CD4-positive, alpha-beta memory T cell (primary cell): ENCODE measurements at regions of chr14 and their contacts with region 1.

Region 1: GRCh38 chr14:50860478-50861086 is 11.3 kb upstream of the ABHD12B start:
- DNase-seq: peak; percentile 82 to 89 (median 86)
- H3K4me3 ChIP-seq: peak overlapping the region; percentile 67 to 84
- H3K4me3 Mint-ChIP-seq: peak overlapping the region; percentile 88 to 95 (median 94)
- H3K27ac ChIP-seq: peak overlapping the region; percentile 40
- H3K27ac Mint-ChIP-seq: peak overlapping the region; percentile 78 to 93 (median 91)
- H3K4me1 ChIP-seq: peaks cover 13% of the 10 kb centered on the region
- H3K4me1 Mint-ChIP-seq: peaks cover 2 to 16% (median 9%) of the 10 kb centered on the region in 4 donors
- H3K27me3 ChIP-seq: no peaks in the 10 kb centered on the region
- H3K27me3 Mint-ChIP-seq: no peaks in the 10 kb centered on the region

Region 2: DNA sequence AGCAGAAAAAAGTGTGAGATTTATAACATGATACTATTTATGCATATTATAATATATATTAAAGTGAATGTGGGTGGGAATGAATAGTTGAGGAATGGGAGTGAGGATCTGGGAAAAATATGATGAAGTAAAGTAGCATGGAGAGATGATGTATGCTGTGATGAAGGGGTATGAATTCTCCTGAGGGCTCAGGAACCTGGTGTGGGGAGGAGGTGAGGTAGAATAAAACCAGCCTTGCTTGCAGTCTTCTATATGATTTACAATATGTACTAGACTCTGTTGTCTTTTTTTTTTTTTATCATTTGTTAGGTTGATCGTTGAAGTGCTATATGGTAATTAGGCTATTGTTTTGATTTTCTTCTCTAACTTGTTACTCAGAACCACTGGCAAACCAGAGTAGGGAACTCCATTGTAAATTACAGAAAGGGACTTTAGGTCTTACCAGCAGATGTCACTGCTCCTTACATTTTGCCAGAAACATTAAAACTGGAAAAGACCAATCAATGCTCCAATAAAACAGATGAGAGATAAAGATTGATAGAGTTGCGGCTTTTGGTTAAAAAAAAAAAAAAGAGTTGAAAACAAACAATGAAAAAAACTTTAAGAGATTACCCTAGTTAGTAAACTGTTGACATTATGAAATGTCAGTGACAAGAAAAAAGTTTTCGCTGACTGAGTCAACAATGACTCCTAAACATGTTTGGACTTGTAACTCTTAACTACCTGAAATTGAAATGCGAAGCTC is 260.7 kb before region 1 on chr14:
- CTCF ChIA-PET with region 1: interaction called, 36 read pairs
- POLR2A ChIA-PET with region 1: interaction called, 3 read pairs
- intact Hi-C with region 1: loop called (anchors 1 kb)
- DNase-seq: peak in 4 of 5 donors; percentile 1 to 14 (median 8)
- H3K4me3 ChIP-seq: no peak overlapping the region
- H3K4me3 Mint-ChIP-seq: no peak overlapping the region
- H3K27ac ChIP-seq: no peak overlapping the region
- H3K27ac Mint-ChIP-seq: no peak overlapping the region
- H3K4me1 ChIP-seq: no peaks in the 10 kb centered on the region
- H3K4me1 Mint-ChIP-seq: no peaks in the 10 kb centered on the region
- H3K27me3 ChIP-seq: no peaks in the 10 kb centered on the region
- H3K27me3 Mint-ChIP-seq: peaks cover 0 to 1% of the 10 kb centered on the region in 2 donors

Region 3: DNA sequence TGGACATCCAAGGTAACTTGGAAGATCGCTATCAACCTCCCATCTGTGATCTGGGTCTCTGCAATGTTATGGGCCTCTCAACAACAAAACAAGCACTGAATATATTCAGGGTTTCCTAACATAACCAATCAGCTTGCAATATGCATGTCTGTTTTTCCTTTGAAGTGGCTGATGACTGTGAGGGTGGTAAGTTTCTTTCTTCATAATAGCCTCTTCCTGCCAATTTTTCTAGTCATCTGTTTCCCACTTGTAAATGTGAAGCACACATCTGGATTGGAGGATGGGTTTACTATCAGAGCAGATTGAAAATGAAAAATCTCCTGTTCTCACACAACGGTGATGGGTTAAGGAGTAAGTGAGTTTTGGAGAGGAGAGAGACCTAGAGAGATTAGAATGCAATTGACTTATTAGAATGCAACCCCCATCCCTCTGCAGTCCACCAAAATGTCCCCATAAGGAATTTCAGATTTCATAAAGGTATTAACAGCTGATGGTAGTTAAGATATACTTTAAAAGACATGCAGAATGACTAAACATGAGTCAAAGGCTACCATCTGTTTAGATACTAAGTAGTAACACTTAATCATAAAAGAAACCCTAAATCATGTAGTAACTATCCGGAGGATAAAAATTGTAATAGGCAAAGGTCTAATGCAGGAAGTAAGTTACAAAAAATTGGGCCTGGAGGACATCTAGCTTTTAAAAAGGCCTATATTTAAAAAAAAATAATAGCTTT is 134.0 kb before region 1 on chr14:
- CTCF ChIA-PET with region 1: interaction called, 12 read pairs
- POLR2A ChIA-PET with region 1: interaction called, 4 read pairs
- intact Hi-C with region 1: no loop called
- DNase-seq: peak in 4 of 5 donors; percentile 53 to 65 (median 56)
- H3K4me3 ChIP-seq: no peak overlapping the region
- H3K4me3 Mint-ChIP-seq: peak overlapping the region in 7 of 8 donors; percentile 0 to 63 (median 49)
- H3K27ac ChIP-seq: peak overlapping the region; percentile 42
- H3K27ac Mint-ChIP-seq: peak overlapping the region; percentile 54 to 94 (median 80)
- H3K4me1 ChIP-seq: peaks cover 19% of the 10 kb centered on the region
- H3K4me1 Mint-ChIP-seq: peaks cover 14 to 32% (median 21%) of the 10 kb centered on the region in 4 donors
- H3K27me3 ChIP-seq: no peaks in the 10 kb centered on the region
- H3K27me3 Mint-ChIP-seq: no peaks in the 10 kb centered on the region

Region 4: GRCh38 chr14:50773632-50774541 is 86.7 kb before region 1 on chr14:
- CTCF ChIA-PET with region 1: interaction called, 225 read pairs
- POLR2A ChIA-PET with region 1: interaction called, 30 read pairs
- intact Hi-C with region 1: loop called (anchors 1 kb)
- DNase-seq: no peak
- H3K4me3 ChIP-seq: no peak overlapping the region
- H3K4me3 Mint-ChIP-seq: peak overlapping the region in 1 of 8 donors; percentile 33
- H3K27ac ChIP-seq: no peak overlapping the region
- H3K27ac Mint-ChIP-seq: peak overlapping the region in 6 of 7 donors; percentile 25 to 87 (median 59)
- H3K4me1 ChIP-seq: peaks cover 13% of the 10 kb centered on the region
- H3K4me1 Mint-ChIP-seq: peaks cover 15 to 31% (median 20%) of the 10 kb centered on the region in 4 donors
- H3K27me3 ChIP-seq: no peaks in the 10 kb centered on the region
- H3K27me3 Mint-ChIP-seq: no peaks in the 10 kb centered on the region

Region 5: DNA sequence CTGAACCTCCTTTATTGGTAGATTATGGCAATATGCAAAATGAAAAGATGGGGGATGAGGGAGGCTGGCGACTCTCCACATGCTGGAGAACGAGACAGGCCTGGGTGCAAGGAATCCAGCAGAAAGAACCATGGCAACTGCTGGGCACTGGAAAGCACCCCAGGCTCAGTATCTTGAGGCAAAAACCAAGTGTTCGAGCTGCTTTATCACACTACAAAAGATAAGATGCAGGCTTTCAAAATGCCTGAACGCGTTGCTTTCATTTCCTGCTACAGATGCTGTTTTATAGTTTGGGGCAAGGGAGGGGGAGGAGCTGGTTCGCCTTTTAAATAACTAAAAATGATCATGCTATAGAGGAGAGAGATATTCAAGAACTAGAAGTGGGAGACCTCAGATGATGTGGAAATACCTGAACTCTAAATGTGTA is 68.5 kb before region 1 on chr14:
- CTCF ChIA-PET with region 1: interaction called, 79 read pairs
- POLR2A ChIA-PET with region 1: interaction called, 31 read pairs
- intact Hi-C with region 1: no loop called
- DNase-seq: peak in 2 of 5 donors; percentile 17 to 26
- H3K4me3 ChIP-seq: peak overlapping the region in 1 of 2 donors; percentile 48
- H3K4me3 Mint-ChIP-seq: peak overlapping the region; percentile 4 to 81 (median 74)
- H3K27ac ChIP-seq: peak overlapping the region; percentile 24
- H3K27ac Mint-ChIP-seq: peak overlapping the region; percentile 64 to 92 (median 88)
- H3K4me1 ChIP-seq: peaks cover 60% of the 10 kb centered on the region
- H3K4me1 Mint-ChIP-seq: peaks cover 56 to 86% (median 70%) of the 10 kb centered on the region in 4 donors
- H3K27me3 ChIP-seq: no peaks in the 10 kb centered on the region
- H3K27me3 Mint-ChIP-seq: no peaks in the 10 kb centered on the region

Region 6: DNA sequence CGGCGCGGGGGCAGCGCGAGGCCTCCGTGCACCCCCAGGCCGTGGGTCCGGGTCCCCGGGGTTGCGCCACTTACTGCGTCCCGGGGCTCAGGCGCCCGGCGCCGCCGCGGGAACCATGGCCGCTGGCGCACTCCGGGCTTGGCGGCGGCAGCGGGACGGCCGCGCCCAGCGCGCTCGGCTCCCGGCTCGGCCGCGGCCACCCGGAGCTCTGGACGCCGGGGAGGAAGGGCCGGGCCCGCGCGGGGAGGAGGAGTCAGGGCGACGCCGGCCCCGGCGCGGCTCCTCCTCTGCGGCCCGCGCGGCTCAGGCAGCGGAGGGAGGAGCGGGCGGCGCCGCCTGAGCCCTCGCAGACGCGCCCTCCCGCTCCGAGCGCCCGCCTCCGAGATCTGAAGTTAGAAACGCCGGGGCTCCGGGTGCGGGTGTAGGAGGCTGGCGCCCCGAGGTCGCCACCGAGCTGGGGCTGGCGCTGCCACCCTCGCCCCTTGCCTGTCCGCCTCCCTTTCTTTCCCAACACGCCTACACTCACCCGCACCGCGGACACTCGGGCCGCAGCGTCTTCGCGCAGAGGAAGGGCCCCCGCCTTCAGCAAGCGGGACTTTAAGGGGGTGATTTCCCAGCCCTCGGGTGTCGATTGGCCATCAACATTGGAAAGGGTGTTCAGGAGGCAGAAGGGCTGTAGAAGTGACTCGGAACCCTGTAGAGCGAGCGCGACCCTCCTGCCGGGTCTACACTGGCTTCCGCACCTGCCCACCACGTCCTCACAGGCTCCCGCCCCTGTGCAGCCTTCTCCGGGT is 29.5 kb before region 1 on chr14 and contains the start of gene NIN:
- CTCF ChIA-PET with region 1: interaction called, 55 read pairs
- POLR2A ChIA-PET with region 1: interaction called, 48 read pairs
- intact Hi-C with region 1: loop called (anchors 1 kb)
- DNase-seq: peak; percentile 66 to 76 (median 74)
- H3K4me3 ChIP-seq: peak within 1 kb of the TSS; percentile 77 to 81
- H3K4me3 Mint-ChIP-seq: peak within 1 kb of the TSS; percentile 95 to 100 (median 97)
- H3K27ac ChIP-seq: peak within 1 kb of the TSS; percentile 62
- H3K27ac Mint-ChIP-seq: peak within 1 kb of the TSS; percentile 92 to 97 (median 96)
- H3K4me1 ChIP-seq: peaks cover 56% of the 10 kb centered on the region
- H3K4me1 Mint-ChIP-seq: peaks cover 45 to 72% (median 53%) of the 10 kb centered on the region in 4 donors
- H3K27me3 ChIP-seq: no peaks in the 10 kb centered on the region
- H3K27me3 Mint-ChIP-seq: no peaks in the 10 kb centered on the region
- total RNA-seq, gene NIN: 99.7 to 102 TPM

Region 7: GRCh38 chr14:50871914-50872732 is 11.5 kb after region 1 on chr14 and contains the start of gene ABHD12B:
- CTCF ChIA-PET with region 1: interaction called, 18 read pairs
- POLR2A ChIA-PET with region 1: interaction called, 3 read pairs
- intact Hi-C with region 1: no loop called
- DNase-seq: no peak
- H3K4me3 ChIP-seq: no peak within 1 kb of the TSS
- H3K4me3 Mint-ChIP-seq: peak within 1 kb of the TSS in 7 of 8 donors; percentile 4 to 64 (median 32)
- H3K27ac ChIP-seq: no peak within 1 kb of the TSS
- H3K27ac Mint-ChIP-seq: no peak within 1 kb of the TSS
- H3K4me1 ChIP-seq: peaks cover 21% of the 10 kb centered on the region
- H3K4me1 Mint-ChIP-seq: peaks cover 21 to 41% (median 26%) of the 10 kb centered on the region in 4 donors
- H3K27me3 ChIP-seq: peaks cover 38% of the 10 kb centered on the region
- H3K27me3 Mint-ChIP-seq: peaks cover 48 to 63% of the 10 kb centered on the region in 2 donors
- total RNA-seq, gene ABHD12B: not detected